ENCODE measurements at regions of chr11 and their contacts with region 1.

Region 1: GRCh38 chr11:4539603-4540219 is 5.3 kb upstream of the OR52M1 start:
- DNase-seq: peak; percentile 63
- ATAC-seq: peak; percentile 83
- H3K4me3 ChIP-seq: no peak overlapping the region
- H3K27ac ChIP-seq: no peak overlapping the region
- H3K4me1 ChIP-seq: peaks cover 6% of the 10 kb centered on the region; the same call in 1 of the 2 replicates
- H3K27me3 ChIP-seq: no peaks in the 10 kb centered on the region
- CTCF ChIP-seq: peak; percentile 84

Region 2: GRCh38 chr11:4181782-4182721 is 357.7 kb before region 1 on chr11:
- CTCF ChIA-PET with region 1: interaction called, 18 read pairs
- POLR2A ChIA-PET with region 1: no interaction called
- intact Hi-C with region 1: loop called (anchors 1 kb)
- DNase-seq: peak; percentile 74
- ATAC-seq: peak; percentile 95
- H3K4me3 ChIP-seq: no peak overlapping the region
- H3K27ac ChIP-seq: no peak overlapping the region
- H3K4me1 ChIP-seq: no peaks in the 10 kb centered on the region
- H3K27me3 ChIP-seq: no peaks in the 10 kb centered on the region
- CTCF ChIP-seq: peak; percentile 86

Region 3: GRCh38 chr11:4551346-4551979 is 11.8 kb after region 1 on chr11:
- CTCF ChIA-PET with region 1: no interaction called
- POLR2A ChIA-PET with region 1: no interaction called
- intact Hi-C with region 1: no loop called
- DNase-seq: peak; percentile 42
- ATAC-seq: peak; percentile 62
- H3K4me3 ChIP-seq: no peak overlapping the region
- H3K27ac ChIP-seq: no peak overlapping the region
- H3K4me1 ChIP-seq: no peaks in the 10 kb centered on the region
- H3K27me3 ChIP-seq: no peaks in the 10 kb centered on the region
- CTCF ChIP-seq: peak; percentile 65

Region 4: DNA sequence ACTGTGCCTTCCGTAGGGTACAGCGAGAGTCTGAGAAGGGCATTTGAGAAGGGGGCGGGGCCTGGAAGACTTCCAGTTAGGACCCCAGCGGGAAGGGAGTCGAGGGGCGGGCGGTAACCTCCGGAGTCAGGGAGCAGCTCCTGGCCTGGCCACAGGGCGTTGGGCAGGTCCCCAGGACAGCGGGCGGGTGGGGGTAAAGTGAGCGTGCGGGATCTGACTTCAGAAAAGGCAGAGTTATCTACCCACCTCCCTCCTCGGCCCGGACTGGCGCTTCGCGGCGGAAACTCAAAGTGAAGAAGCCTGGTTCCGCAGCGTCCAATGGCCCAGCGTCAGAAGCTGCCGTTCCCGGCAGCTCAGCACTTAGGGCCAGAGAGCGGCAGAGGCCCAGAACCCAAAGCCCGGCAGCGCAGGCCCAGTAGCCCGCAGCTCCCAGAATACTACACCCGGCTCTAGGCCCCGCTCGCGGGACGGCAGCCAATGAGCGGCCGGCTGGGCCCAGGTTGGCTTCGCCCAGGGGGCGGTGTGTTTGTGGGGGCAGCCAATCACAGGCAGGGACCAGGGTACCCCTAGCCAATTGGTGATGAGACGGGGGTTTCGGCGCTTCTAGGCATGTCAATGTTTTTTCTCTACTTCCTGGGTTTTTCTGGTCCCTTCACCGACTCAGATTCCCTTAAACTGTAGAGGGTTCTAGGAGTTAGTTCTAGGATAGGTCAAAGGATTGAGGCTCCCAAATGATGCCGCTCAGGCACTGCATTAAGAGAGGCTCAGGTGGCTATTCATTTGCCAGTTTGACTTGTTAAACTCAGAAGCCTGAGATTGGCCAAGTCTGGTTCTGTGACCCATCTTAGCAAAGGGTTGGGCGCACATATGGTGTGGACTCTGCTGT is 68.3 kb after region 1 on chr11 and contains the start of gene TRIM68:
- CTCF ChIA-PET with region 1: no interaction called
- POLR2A ChIA-PET with region 1: no interaction called
- intact Hi-C with region 1: no loop called
- DNase-seq: peak; percentile 94
- ATAC-seq: peak; percentile 99
- H3K4me3 ChIP-seq: peak within 1 kb of the TSS; percentile 75
- H3K27ac ChIP-seq: peak within 1 kb of the TSS; percentile 35
- H3K4me1 ChIP-seq: peaks cover 15% of the 10 kb centered on the region
- H3K27me3 ChIP-seq: no peaks in the 10 kb centered on the region
- CTCF ChIP-seq: no peak
- total RNA-seq, gene TRIM68: 6.1 and 6.9 TPM in 2 replicates

Region 5: DNA sequence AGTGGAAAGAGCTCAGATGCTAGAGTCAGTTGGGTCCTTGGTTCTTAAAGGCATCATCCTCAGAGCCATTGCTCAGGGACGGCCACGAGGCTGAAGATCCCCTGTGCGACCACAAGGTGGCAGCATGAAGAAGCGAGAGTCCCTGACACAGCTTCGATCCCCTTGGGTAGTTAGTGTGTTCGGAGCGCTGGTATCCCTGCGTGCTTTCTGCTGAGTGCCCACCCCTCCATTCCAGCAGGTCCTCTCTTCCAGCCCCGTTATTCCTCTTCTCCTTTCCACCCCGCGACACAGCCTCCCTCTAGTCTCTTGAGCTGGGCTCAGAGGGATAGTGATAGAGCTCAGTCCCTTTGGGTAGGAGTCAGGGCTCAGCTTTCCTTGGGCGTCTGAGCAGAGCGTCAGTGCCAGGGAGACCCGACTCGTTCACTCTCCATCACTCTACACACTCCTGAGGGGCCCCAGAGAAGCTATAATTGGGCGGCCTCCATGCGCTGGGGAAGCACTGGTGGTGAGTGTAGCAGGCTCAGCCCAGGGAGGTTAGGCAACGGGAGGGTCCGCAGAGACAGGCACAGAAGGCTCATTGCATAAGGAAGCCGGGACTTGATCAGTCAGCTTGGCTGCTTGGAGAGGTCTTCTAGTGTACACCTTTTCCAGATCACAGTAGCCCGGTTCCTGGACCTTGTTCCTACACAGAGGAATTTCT is 97.4 kb after region 1 on chr11 and contains the start of gene OR51D1:
- CTCF ChIA-PET with region 1: no interaction called
- POLR2A ChIA-PET with region 1: no interaction called
- intact Hi-C with region 1: no loop called
- DNase-seq: peak; percentile 73
- ATAC-seq: peak; percentile 92
- H3K4me3 ChIP-seq: no peak within 1 kb of the TSS
- H3K27ac ChIP-seq: no peak within 1 kb of the TSS
- H3K4me1 ChIP-seq: no peaks in the 10 kb centered on the region
- H3K27me3 ChIP-seq: no peaks in the 10 kb centered on the region; the same call in 1 of the 2 replicates
- CTCF ChIP-seq: peak; percentile 73
- total RNA-seq, gene OR51D1: not detected in 2 replicates